ENCODE measurements at regions of chr19 and their contacts with region 1.

Region 1: GRCh38 chr19:58278157-58279041 is at the start of gene ZNF8:
- DNase-seq: peak; percentile 97
- H3K4me3 Mint-ChIP-seq: peak within 1 kb of the TSS; percentile 92
- H3K27ac Mint-ChIP-seq: peak within 1 kb of the TSS; percentile 93
- H3K4me1 Mint-ChIP-seq: peaks cover 23% of the 10 kb centered on the region
- H3K27me3 Mint-ChIP-seq: no peaks in the 10 kb centered on the region
- total RNA-seq, gene ZNF8: 4.0 and 4.4 TPM in 2 replicates

Region 2: DNA sequence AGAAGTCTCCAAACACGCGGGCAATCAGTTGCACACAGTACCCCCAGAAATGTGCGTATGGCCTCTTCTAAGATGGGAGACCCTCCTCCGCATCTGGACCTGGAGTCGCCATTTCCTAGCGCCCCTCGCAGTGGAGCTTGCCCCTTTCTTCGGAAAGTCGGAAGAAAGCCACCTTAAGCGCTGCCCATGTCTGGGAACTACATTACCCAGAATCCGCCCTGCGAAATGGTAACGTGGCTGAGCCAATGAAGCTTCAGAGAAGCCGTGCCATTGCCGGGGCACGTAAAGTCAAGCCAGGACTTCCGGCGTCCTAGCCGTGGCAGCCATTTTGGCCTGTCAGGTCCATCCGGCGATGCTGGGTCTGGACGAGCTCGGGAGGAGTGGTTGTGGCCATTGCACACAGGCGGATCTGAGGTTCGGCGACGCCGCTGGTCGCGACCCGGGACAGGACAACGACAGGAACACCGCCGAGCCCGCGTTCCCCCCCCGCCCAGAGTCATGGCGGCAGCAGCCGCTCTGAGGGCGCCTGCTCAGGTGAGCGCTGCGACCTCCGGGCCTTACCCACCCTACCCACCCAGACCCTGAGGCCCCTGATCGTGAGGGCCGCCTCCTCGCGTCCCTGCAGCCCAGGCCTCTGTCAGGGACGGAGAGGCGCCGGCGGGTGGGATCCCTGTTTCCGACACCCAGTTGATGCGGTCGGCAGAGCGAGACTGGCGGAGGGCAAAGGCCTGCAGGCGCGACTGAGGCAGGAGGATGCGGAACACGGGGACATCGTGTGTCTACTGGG is 508.9 kb before region 1 on chr19 and contains the start of gene ZNF586:
- intact Hi-C with region 1: loop called (anchors 1 kb)
- DNase-seq: peak; percentile 85
- H3K4me3 Mint-ChIP-seq: peak within 1 kb of the TSS; percentile 94
- H3K27ac Mint-ChIP-seq: peak within 1 kb of the TSS; percentile 89
- H3K4me1 Mint-ChIP-seq: peaks cover 24% of the 10 kb centered on the region
- H3K27me3 Mint-ChIP-seq: no peaks in the 10 kb centered on the region
- total RNA-seq, gene ZNF586: 13.6 and 13.8 TPM in 2 replicates

Region 3: GRCh38 chr19:57786906-57787305 is 491.5 kb before region 1 on chr19:
- intact Hi-C with region 1: no loop called
- DNase-seq: no peak
- H3K4me3 Mint-ChIP-seq: no peak overlapping the region
- H3K27ac Mint-ChIP-seq: no peak overlapping the region
- H3K4me1 Mint-ChIP-seq: peaks cover 14% of the 10 kb centered on the region
- H3K27me3 Mint-ChIP-seq: no peaks in the 10 kb centered on the region

Region 4: GRCh38 chr19:58228585-58229254 is 49.7 kb before region 1 on chr19 and contains the start of gene ZNF544:
- intact Hi-C with region 1: loop called (anchors 1 kb)
- DNase-seq: peak; percentile 60
- H3K4me3 Mint-ChIP-seq: peak within 1 kb of the TSS; percentile 89
- H3K27ac Mint-ChIP-seq: peak within 1 kb of the TSS; percentile 96
- H3K4me1 Mint-ChIP-seq: peaks cover 32% of the 10 kb centered on the region
- H3K27me3 Mint-ChIP-seq: no peaks in the 10 kb centered on the region
- total RNA-seq, gene ZNF544: 51.8 and 56.1 TPM in 2 replicates

Region 5: GRCh38 chr19:58296104-58296503 is 17.7 kb after region 1 on chr19:
- intact Hi-C with region 1: no loop called
- DNase-seq: no peak
- H3K4me3 Mint-ChIP-seq: no peak overlapping the region
- H3K27ac Mint-ChIP-seq: no peak overlapping the region
- H3K4me1 Mint-ChIP-seq: no peaks in the 10 kb centered on the region
- H3K27me3 Mint-ChIP-seq: no peaks in the 10 kb centered on the region

Region 6: DNA sequence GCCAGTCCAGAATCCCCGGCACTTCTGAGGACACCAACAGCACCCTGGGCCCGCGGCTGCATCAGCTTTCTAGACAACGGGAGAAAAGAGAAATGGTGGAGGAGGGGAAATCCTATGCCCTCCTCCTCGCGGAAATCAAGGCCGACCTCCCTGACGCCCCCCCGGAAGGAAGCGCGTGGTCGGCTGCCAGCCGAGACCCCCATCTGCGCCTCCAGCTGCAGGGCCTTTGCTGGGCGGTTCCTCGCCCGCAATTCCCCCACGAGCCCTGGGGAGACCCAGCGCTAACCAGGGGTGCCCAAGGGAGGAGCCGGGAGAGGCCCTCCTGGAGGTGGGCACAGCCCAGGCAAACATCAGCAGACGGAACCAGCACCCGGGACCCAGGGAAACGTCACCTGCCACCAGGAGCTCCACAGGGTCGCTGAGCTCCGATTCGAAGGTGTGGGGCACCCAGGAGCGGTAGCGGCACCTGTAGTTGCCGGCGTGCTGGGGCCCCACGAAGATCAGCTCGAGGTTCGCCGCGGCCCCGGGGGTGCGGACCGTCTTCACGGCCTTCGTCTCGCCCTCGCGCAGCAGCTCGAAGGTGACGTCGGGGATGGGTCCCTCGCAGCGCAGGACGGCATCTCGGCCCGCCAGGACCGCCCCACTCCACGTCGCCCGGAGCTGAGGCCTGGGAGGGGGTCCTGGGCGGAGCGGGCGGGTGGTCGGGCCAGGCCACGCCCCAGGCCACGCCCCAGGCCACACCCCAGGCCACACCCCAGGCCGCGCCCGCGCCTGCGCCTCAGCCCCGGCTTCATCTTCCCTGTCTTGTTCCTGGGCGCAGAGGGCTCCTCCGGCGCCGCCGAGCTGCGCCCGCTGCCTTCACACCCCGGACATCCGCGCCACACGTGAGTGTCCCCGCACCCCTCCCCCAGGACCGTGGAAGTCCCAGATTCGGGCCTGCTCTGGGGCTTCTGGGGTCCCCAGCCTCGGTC is 68.8 kb after region 1 on chr19:
- intact Hi-C with region 1: loop called (anchors 5 kb)
- DNase-seq: peak; percentile 63
- H3K4me3 Mint-ChIP-seq: peak overlapping the region; percentile 92
- H3K27ac Mint-ChIP-seq: peak overlapping the region; percentile 83
- H3K4me1 Mint-ChIP-seq: peaks cover 29% of the 10 kb centered on the region
- H3K27me3 Mint-ChIP-seq: no peaks in the 10 kb centered on the region